Dendritic cell treated with granulocyte-macrophage colony-stimulating factor and Interleukin-4, amounts not matched to agents 40 ng/mL and 50 ng/mL, for 4 days (primary cell): ENCODE measurements at regions of chr16 and their contacts with region 1.

Region 1: DNA sequence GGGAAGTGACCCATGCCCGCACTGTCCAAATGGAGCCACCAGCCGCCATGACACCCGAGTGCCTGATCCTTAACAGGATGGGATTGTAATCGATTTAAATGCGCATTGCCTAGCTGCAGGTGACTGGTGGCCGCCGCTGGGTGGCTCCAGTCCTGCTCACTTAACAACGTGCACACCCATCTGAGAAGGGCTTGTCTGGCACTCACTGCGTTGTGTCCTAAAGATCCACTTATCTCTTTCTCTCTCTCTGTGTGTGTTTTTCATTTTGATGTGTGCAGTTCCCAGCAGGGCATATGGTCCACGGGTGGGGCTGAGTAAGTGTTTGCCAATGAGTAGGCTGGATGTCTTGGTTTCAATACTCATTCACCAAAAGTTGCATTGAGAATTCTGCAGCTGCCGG is 80.6 kb downstream of the IRF8 start:
- H3K4me3 Mint-ChIP-seq: no peak overlapping the region
- H3K27ac Mint-ChIP-seq: peak overlapping the region; percentile 86
- H3K4me1 Mint-ChIP-seq: peaks cover 90% of the 10 kb centered on the region
- H3K27me3 Mint-ChIP-seq: peaks cover 3% of the 10 kb centered on the region

Region 2: GRCh38 chr16:85717393-85718121 is 262.0 kb before region 1 on chr16:
- intact Hi-C with region 1: no loop called
- H3K4me3 Mint-ChIP-seq: no peak overlapping the region
- H3K27ac Mint-ChIP-seq: no peak overlapping the region
- H3K4me1 Mint-ChIP-seq: peaks cover 13% of the 10 kb centered on the region
- H3K27me3 Mint-ChIP-seq: peaks cover 15% of the 10 kb centered on the region

Region 3: DNA sequence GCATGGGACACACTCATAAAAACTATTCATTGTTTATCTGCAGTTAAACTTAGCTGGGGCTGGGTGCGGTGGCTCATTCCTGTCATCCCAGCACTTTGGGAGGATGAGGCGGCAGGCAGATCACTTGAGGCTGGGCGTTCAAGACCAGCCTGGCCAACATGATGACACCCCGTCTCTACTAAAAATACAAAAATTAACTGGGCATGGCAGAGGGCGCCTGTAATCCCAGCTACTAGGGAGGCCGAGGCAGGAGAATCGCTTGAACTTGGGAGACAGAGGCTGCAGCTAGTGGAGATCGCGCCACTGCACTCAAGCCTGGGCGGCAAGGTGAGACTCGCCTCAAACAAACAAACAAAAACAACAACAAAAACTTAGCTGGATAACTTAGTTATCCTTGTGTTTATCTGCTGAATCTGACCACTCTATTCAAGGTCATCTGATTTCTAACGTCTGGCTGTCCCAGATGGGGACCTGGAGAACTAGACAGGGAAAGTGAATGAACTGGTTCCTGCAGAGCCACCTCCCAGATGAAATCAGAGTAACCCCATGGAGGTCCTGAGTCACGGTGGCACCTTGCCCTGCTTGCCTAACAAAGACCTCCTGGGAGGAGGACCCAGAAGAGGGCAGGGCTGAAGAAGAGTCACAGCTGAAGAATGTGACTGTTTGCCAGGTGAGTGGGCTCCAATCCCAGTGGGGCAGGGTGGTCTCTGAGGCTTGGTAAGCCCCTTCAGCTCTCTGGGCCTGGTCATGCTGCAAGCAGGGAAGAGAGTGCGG is 233.4 kb before region 1 on chr16:
- intact Hi-C with region 1: no loop called
- H3K4me3 Mint-ChIP-seq: no peak overlapping the region
- H3K27ac Mint-ChIP-seq: no peak overlapping the region
- H3K4me1 Mint-ChIP-seq: peaks cover 7% of the 10 kb centered on the region
- H3K27me3 Mint-ChIP-seq: peaks cover 14% of the 10 kb centered on the region

Region 4: DNA sequence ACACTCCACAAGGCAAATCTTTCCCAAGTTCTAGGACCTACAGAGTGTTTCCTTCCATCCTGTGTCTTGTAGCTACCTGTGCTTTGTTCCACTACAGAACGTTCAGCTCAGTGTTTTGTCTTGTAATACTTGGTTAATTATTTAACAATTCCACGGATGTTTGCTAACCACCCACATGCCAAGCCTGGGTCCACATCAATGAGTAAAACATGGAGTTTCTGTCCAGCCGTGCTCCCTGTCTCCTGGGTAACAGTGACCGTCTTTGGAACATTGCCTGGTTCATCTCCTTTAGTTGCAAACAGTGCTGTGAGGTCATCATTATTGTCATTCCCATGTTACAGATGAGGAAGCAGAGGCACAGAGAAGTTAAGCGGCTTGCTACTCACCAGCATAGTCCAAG is 39.4 kb before region 1 on chr16:
- intact Hi-C with region 1: loop called (anchors 5 kb)
- H3K4me3 Mint-ChIP-seq: no peak overlapping the region
- H3K27ac Mint-ChIP-seq: no peak overlapping the region
- H3K4me1 Mint-ChIP-seq: peaks cover 59% of the 10 kb centered on the region
- H3K27me3 Mint-ChIP-seq: peaks cover 23% of the 10 kb centered on the region